ENCODE measurements at regions of chr6 and their contacts with region 1.

Region 1: GRCh38 chr6:42547407-42548329 is 16.2 kb upstream of the UBR2 start:
- DNase-seq: no peak
- ATAC-seq: peak; percentile 100
- H3K4me3 ChIP-seq: peak overlapping the region; percentile 59
- H3K27ac ChIP-seq: no peak overlapping the region
- H3K4me1 ChIP-seq: peaks cover 10% of the 10 kb centered on the region
- H3K27me3 ChIP-seq: no peaks in the 10 kb centered on the region
- CTCF ChIP-seq: peak; percentile 99; a peak in 5 of 6 replicates
- EP300 ChIP-seq: no peak
- POLR2A ChIP-seq: no peak; the same call in 1 of the 2 replicates
- RAD21 ChIP-seq: peak; percentile 99

Region 2: GRCh38 chr6:41887331-41887751 is 660.3 kb before region 1 on chr6:
- CTCF ChIA-PET with region 1: no interaction called
- POLR2A ChIA-PET with region 1: no interaction called
- RAD21 ChIA-PET with region 1: no interaction called
- SMC1A ChIA-PET with region 1: no interaction called
- in situ Hi-C with region 1: no loop called
- intact Hi-C with region 1: no loop called
- DNase-seq: no peak
- ATAC-seq: no peak
- H3K4me3 ChIP-seq: no peak overlapping the region
- H3K27ac ChIP-seq: no peak overlapping the region
- H3K4me1 ChIP-seq: no peaks in the 10 kb centered on the region
- H3K27me3 ChIP-seq: no peaks in the 10 kb centered on the region
- CTCF ChIP-seq: no peak
- EP300 ChIP-seq: no peak
- POLR2A ChIP-seq: no peak
- RAD21 ChIP-seq: no peak

Region 3: DNA sequence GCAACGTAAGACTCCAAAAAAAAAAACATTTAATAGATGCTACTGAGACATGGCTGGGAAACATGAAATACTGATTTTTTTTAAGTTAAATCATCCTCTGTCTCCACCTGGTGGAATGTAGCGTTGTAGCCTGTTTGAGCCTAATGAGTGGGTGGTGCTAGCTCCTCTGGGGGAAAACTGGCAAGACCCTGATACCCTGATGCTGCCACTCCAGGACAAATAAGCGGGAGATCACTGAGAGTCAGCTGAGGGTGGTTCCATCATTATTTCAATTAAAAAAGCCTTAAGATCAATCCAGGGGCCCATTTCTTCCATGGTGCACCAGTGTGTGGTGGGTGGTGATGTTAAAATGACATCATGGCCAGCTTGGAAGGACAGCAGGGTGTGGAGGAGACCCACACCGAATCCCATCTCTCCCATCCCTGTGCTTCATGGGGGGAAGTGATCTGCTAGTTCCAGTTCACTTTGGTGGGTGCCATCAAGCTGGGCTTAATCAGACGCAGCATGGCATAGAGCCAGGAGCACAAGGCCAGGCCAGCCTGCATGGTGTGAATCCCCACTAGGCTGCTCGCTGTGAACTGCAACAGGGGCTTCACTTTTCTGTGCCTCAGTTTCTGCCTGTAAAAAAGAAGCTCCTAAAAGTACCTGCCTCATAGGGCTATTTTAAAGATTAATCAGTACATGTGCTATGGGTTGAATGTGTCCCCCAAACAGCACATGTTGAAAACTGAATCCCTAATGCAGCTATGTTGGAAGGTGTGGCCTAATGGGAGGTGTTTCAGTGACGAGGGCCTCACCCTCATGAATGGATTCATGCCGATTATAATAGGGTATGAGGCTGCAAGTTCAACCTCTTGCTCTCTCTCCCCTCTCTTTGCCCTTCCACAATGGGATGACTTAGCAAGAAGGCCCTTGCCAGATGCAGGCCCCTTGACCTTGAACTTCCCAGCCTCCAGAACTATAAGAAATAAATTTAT is 317.0 kb before region 1 on chr6:
- CTCF ChIA-PET with region 1: interaction called, 12 read pairs
- POLR2A ChIA-PET with region 1: no interaction called
- RAD21 ChIA-PET with region 1: interaction called, 9 read pairs
- SMC1A ChIA-PET with region 1: interaction called, 4 read pairs
- in situ Hi-C with region 1: no loop called
- intact Hi-C with region 1: no loop called
- DNase-seq: no peak
- ATAC-seq: peak; percentile 79
- H3K4me3 ChIP-seq: no peak overlapping the region
- H3K27ac ChIP-seq: no peak overlapping the region
- H3K4me1 ChIP-seq: no peaks in the 10 kb centered on the region
- H3K27me3 ChIP-seq: no peaks in the 10 kb centered on the region
- CTCF ChIP-seq: peak; percentile 46 to 70 (median 54); a peak in 5 of 6 replicates
- EP300 ChIP-seq: no peak
- POLR2A ChIP-seq: no peak
- RAD21 ChIP-seq: peak; percentile 66

Region 4: GRCh38 chr6:42306439-42307140 is 241.1 kb before region 1 on chr6:
- CTCF ChIA-PET with region 1: interaction called, 51 read pairs
- POLR2A ChIA-PET with region 1: interaction called, 4 read pairs
- RAD21 ChIA-PET with region 1: interaction called, 31 read pairs
- SMC1A ChIA-PET with region 1: interaction called, 42 read pairs
- in situ Hi-C with region 1: loop called (anchors 5 kb)
- intact Hi-C with region 1: loop called (anchors 1 kb)
- DNase-seq: no peak
- ATAC-seq: no peak
- H3K4me3 ChIP-seq: no peak overlapping the region
- H3K27ac ChIP-seq: no peak overlapping the region
- H3K4me1 ChIP-seq: no peaks in the 10 kb centered on the region
- H3K27me3 ChIP-seq: no peaks in the 10 kb centered on the region
- CTCF ChIP-seq: no peak
- EP300 ChIP-seq: no peak
- POLR2A ChIP-seq: no peak
- RAD21 ChIP-seq: no peak

Region 5: DNA sequence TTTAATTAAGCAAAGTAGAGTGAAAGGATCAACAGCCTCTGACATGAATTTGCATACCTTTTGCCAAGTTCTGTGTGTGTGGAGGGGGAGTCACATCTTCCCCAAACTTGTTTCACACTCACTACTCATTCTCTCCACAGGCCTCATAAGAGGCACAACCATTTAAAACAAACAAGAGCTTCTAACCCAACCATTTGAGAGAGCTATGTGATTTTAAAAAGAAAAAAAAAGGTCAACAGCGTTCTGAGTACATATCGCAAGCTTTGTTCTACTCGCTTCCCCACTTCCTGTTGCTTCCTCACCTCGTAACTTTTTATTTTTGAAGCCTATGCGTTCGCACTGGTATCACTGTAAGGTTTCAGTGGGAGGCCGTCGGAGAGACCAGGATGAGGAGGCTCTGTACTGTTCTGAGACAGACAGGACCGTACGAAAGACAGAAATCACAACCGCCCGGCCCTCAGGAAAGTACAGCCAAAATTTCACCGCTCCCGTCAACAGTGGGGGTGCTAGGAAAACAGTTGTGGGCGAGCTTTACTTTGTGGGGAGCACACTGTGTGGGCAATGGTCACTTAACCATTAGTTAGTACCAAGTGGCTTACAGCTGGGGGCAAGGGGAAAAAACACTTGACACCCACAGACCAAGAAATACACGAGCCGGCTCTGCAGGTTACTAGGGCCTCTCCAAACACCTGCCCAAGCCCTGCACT is 157.3 kb before region 1 on chr6:
- CTCF ChIA-PET with region 1: interaction called, 18 read pairs
- POLR2A ChIA-PET with region 1: no interaction called
- RAD21 ChIA-PET with region 1: interaction called, 19 read pairs
- SMC1A ChIA-PET with region 1: interaction called, 13 read pairs
- in situ Hi-C with region 1: no loop called
- intact Hi-C with region 1: no loop called
- DNase-seq: no peak
- ATAC-seq: peak; percentile 82
- H3K4me3 ChIP-seq: peak overlapping the region; percentile 42; the same call in 1 of the 2 replicates
- H3K27ac ChIP-seq: peak overlapping the region; percentile 76
- H3K4me1 ChIP-seq: peaks cover 47% of the 10 kb centered on the region
- H3K27me3 ChIP-seq: no peaks in the 10 kb centered on the region
- CTCF ChIP-seq: no peak
- EP300 ChIP-seq: peak; percentile 32 to 42; a peak in 2 of 4 replicates
- POLR2A ChIP-seq: 0 out of 2 replicates have a peak, but pooled peaks have one; percentile 28
- RAD21 ChIP-seq: 0 out of 2 replicates have a peak, but pooled peaks have one; percentile 3

Region 6: DNA sequence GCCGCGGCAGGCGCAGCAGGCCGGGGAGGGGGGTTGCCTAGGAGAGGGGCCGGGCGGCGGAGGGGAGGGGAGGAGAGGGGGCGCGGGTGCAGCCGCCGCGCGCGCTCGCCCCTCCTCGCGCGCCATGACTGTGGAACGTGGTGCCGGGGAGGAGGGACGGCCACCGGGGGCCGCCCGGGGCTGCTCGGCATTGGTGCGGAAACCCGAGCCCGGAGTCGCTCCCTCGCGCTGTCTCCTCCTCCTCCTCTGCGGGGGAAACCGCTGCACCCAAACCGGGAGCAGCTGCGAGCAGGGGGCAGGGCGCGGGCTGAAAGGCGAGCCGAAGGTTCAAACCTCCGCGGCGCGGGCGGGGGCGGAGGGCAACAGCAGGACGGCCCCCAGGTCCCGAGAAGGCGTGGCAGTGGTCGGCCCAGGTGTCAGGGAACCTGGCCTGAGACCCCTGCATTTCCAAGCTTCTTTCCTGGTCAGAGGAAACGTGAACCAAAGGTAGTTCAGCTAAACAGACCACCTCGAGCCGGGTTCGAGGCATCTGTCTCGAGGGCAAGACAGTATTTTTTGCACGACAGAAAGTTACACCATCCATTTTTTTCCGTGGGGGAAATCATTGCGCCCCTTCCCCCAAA is 94.5 kb before region 1 on chr6:
- CTCF ChIA-PET with region 1: interaction called, 29 read pairs
- POLR2A ChIA-PET with region 1: interaction called, 4 read pairs
- RAD21 ChIA-PET with region 1: interaction called, 31 read pairs
- SMC1A ChIA-PET with region 1: interaction called, 12 read pairs
- in situ Hi-C with region 1: no loop called
- intact Hi-C with region 1: no loop called
- DNase-seq: peak; percentile 51
- ATAC-seq: peak; percentile 88
- H3K4me3 ChIP-seq: peak overlapping the region; percentile 85
- H3K27ac ChIP-seq: peak overlapping the region; percentile 68
- H3K4me1 ChIP-seq: peaks cover 12% of the 10 kb centered on the region
- H3K27me3 ChIP-seq: no peaks in the 10 kb centered on the region
- CTCF ChIP-seq: no peak; a peak in 1 of 6 replicates
- EP300 ChIP-seq: 0 out of 4 replicates have a peak, but pooled peaks have one; percentile 2
- POLR2A ChIP-seq: peak; percentile 77
- RAD21 ChIP-seq: peak; percentile 20; the same call in 1 of the 2 replicates

Region 7: GRCh38 chr6:42520786-42521607 is 26.7 kb before region 1 on chr6:
- CTCF ChIA-PET with region 1: interaction called, 23 read pairs
- POLR2A ChIA-PET with region 1: interaction called, 4 read pairs
- RAD21 ChIA-PET with region 1: interaction called, 18 read pairs
- SMC1A ChIA-PET with region 1: interaction called, 4 read pairs
- in situ Hi-C with region 1: no loop called
- intact Hi-C with region 1: no loop called
- DNase-seq: peak; percentile 74
- ATAC-seq: peak; percentile 91
- H3K4me3 ChIP-seq: no peak overlapping the region
- H3K27ac ChIP-seq: peak overlapping the region; percentile 72
- H3K4me1 ChIP-seq: peaks cover 15% of the 10 kb centered on the region
- H3K27me3 ChIP-seq: no peaks in the 10 kb centered on the region
- CTCF ChIP-seq: no peak
- EP300 ChIP-seq: peak in 1 of 2 experiments; percentile 34; a peak in 1 of 4 replicates
- POLR2A ChIP-seq: 0 out of 2 replicates have a peak, but pooled peaks have one; percentile 37
- RAD21 ChIP-seq: no peak

Region 8: GRCh38 chr6:42652024-42652746 is 104.5 kb after region 1 on chr6:
- CTCF ChIA-PET with region 1: no interaction called
- POLR2A ChIA-PET with region 1: no interaction called
- RAD21 ChIA-PET with region 1: no interaction called
- SMC1A ChIA-PET with region 1: no interaction called
- in situ Hi-C with region 1: no loop called
- intact Hi-C with region 1: no loop called
- DNase-seq: no peak
- ATAC-seq: no peak
- H3K4me3 ChIP-seq: no peak overlapping the region
- H3K27ac ChIP-seq: no peak overlapping the region
- H3K4me1 ChIP-seq: no peaks in the 10 kb centered on the region
- H3K27me3 ChIP-seq: no peaks in the 10 kb centered on the region
- CTCF ChIP-seq: no peak
- EP300 ChIP-seq: no peak
- POLR2A ChIP-seq: no peak
- RAD21 ChIP-seq: no peak